ENCODE measurements at regions of chr1 and their contacts with region 1.

Region 1: GRCh38 chr1:51768971-51769588 is 109.4 kb downstream of the NRDC start:
- DNase-seq: peak; percentile 61
- H3K4me3 Mint-ChIP-seq: no peak overlapping the region
- H3K27ac Mint-ChIP-seq: peak overlapping the region; percentile 66
- H3K4me1 Mint-ChIP-seq: peaks cover 8% of the 10 kb centered on the region
- H3K27me3 Mint-ChIP-seq: no peaks in the 10 kb centered on the region
- CTCF ChIP-seq: peak; percentile 72

Region 2: DNA sequence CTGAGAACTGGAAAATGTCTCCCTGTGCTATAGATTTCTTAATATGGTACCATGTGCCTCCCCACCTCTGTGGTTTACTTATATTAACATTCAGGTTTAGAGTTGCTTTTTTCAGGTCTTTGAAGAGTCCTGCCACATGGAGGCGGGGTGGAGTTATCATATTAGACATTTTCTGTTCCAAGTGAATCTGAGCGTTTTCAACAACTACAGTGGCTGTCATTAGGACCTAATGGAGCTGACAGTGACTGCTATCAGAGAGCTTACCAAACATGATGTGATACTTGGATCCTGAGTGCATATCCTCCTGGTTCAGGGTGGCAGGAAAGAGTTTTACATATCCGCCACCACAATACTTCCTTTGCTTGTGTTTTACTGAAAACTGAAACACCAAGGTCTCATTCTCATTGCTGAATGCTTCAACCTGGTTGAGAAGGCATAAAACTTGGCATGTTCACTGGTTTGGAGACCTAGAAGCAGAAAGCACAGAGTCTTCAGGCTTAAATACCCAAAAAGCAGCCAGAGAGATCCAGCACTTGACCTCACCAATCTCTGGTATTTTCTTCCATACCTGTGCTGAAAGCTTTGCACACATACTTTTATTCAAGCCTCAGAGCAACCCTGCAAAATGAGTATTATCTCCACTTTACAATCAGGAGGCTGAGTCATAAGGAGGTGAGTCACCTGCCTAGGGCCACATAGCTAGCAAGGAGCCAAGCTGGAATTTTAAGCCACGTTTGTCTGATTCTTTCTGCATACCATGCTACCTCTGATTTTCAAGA is 199.6 kb before region 1 on chr1:
- CTCF ChIA-PET with region 1: interaction called, 4 read pairs
- POLR2A ChIA-PET with region 1: interaction called, 9 read pairs
- intact Hi-C with region 1: loop called (anchors 2 kb)
- DNase-seq: peak; percentile 93
- H3K4me3 Mint-ChIP-seq: peak overlapping the region; percentile 38
- H3K27ac Mint-ChIP-seq: peak overlapping the region; percentile 54
- H3K4me1 Mint-ChIP-seq: peaks cover 22% of the 10 kb centered on the region
- H3K27me3 Mint-ChIP-seq: no peaks in the 10 kb centered on the region
- CTCF ChIP-seq: peak; percentile 16

Region 3: GRCh38 chr1:51627678-51628077 is 141.4 kb before region 1 on chr1:
- CTCF ChIA-PET with region 1: interaction called, 133 read pairs
- POLR2A ChIA-PET with region 1: interaction called, 10 read pairs
- intact Hi-C with region 1: loop called (anchors 1 kb)
- DNase-seq: peak; percentile 69
- H3K4me3 Mint-ChIP-seq: no peak overlapping the region
- H3K27ac Mint-ChIP-seq: no peak overlapping the region
- H3K4me1 Mint-ChIP-seq: peaks cover 12% of the 10 kb centered on the region
- H3K27me3 Mint-ChIP-seq: no peaks in the 10 kb centered on the region
- CTCF ChIP-seq: peak; percentile 51

Region 4: DNA sequence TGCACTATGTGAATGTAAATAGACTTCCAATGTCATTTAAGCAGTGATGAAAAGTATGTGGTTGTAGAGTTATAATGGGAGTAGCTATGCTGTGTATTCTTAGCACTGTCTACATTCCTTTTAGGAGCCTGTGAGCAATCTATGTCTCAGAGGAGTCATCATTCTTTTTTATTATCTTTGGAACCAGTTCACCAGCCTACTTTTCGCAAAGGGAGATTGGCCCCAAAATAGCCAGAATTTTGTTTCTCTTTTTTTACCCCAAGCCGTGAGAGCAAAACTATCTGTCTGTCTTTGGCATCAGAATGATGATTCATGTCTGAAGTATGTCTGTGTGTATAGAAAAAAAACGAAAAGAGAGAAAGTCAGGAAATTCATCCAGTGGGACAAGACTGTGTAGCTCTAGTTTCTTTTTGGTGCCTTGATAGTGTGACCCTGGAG is 108.0 kb before region 1 on chr1:
- CTCF ChIA-PET with region 1: interaction called, 4 read pairs
- POLR2A ChIA-PET with region 1: no interaction called
- intact Hi-C with region 1: loop called (anchors 1 kb)
- DNase-seq: peak; percentile 89
- H3K4me3 Mint-ChIP-seq: peak overlapping the region; percentile 59
- H3K27ac Mint-ChIP-seq: peak overlapping the region; percentile 87
- H3K4me1 Mint-ChIP-seq: peaks cover 33% of the 10 kb centered on the region
- H3K27me3 Mint-ChIP-seq: no peaks in the 10 kb centered on the region
- CTCF ChIP-seq: no peak

Region 5: GRCh38 chr1:51756290-51756689 is 12.8 kb before region 1 on chr1:
- CTCF ChIA-PET with region 1: interaction called, 13 read pairs
- POLR2A ChIA-PET with region 1: interaction called, 6 read pairs
- intact Hi-C with region 1: no loop called
- DNase-seq: no peak
- H3K4me3 Mint-ChIP-seq: no peak overlapping the region
- H3K27ac Mint-ChIP-seq: no peak overlapping the region
- H3K4me1 Mint-ChIP-seq: peaks cover 10% of the 10 kb centered on the region
- H3K27me3 Mint-ChIP-seq: no peaks in the 10 kb centered on the region
- CTCF ChIP-seq: no peak

Region 6: GRCh38 chr1:51976846-51977535 is 207.9 kb after region 1 on chr1:
- CTCF ChIA-PET with region 1: no interaction called
- POLR2A ChIA-PET with region 1: no interaction called
- intact Hi-C with region 1: no loop called
- DNase-seq: no peak
- H3K4me3 Mint-ChIP-seq: no peak overlapping the region
- H3K27ac Mint-ChIP-seq: no peak overlapping the region
- H3K4me1 Mint-ChIP-seq: no peaks in the 10 kb centered on the region
- H3K27me3 Mint-ChIP-seq: no peaks in the 10 kb centered on the region
- CTCF ChIP-seq: no peak

Measured in MCF 10A (cell line).